ENCODE measurements at regions of chr11 and their contacts with region 1.

Region 1: GRCh38 chr11:101759771-101760450 is 154.9 kb upstream of the CEP126 start:
- DNase-seq: no peak

Region 2: GRCh38 chr11:100340416-100341323 is 1419.2 kb before region 1 on chr11:
- intact Hi-C with region 1: loop called in 1 of 2 experiments (anchors 5 kb)
- DNase-seq: no peak

Region 3: GRCh38 chr11:101030692-101031091 is 729.2 kb before region 1 on chr11:
- intact Hi-C with region 1: no loop called
- DNase-seq: no peak

Region 4: DNA sequence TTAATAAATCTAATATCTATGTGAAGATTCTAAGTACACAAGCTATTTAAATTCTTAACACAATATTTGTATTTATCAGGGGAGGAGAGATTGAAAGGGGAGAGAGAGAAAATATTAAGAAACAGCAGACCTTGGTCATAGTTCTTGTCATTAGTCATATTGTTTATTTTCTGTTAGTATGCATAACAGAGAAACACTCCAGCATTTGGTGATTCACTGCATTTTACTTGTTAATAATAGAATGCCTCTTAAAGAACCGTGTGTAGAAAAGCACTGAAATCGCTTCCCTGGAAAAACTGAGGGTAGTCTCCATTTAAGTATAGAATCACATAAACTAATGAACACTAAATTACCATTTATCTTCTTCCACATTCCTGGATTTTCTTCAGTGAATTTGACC is 53.4 kb before region 1 on chr11:
- intact Hi-C with region 1: no loop called
- DNase-seq: no peak

Region 5: DNA sequence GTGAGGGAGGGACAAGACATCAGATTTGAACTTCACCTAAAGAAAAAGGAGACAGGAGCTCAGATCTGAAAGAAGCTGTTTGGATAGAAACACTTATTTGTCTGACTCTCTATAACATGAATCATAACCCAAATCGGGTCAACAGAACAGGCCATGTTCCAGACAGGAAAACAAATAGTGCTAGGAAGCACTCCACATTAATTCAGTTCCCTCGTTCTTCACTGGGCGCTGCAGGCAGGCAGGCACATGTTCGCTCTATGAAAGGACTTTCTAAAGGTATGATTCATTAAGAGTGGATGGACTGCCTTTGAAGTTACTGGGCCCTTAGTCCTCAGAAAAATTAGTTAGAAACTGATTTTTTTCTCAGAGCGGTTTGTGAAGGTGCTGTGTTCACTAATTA is 38.6 kb before region 1 on chr11:
- intact Hi-C with region 1: no loop called
- DNase-seq: no peak

Region 6: GRCh38 chr11:101870510-101870909 is 110.6 kb after region 1 on chr11:
- intact Hi-C with region 1: no loop called
- DNase-seq: no peak